Activated CD8-positive, alpha-beta T cell treated with anti-CD3 and anti-CD28 coated beads, Interleukin-2, amount 10 ng/mL, durations not matched to agents 7 days and 5 days (primary cell): ENCODE measurements at regions of chr1 and their contacts with region 1.

Region 1: GRCh38 chr1:156813750-156814570 is 2.7 kb downstream of the SH2D2A start:
- DNase-seq: peak; percentile 83
- ATAC-seq: peak; percentile 55
- H3K4me3 Mint-ChIP-seq: peak overlapping the region; percentile 92
- H3K27ac Mint-ChIP-seq: peak overlapping the region; percentile 100
- H3K4me1 Mint-ChIP-seq: peaks cover 70% of the 10 kb centered on the region
- H3K27me3 Mint-ChIP-seq: no peaks in the 10 kb centered on the region

Region 2: DNA sequence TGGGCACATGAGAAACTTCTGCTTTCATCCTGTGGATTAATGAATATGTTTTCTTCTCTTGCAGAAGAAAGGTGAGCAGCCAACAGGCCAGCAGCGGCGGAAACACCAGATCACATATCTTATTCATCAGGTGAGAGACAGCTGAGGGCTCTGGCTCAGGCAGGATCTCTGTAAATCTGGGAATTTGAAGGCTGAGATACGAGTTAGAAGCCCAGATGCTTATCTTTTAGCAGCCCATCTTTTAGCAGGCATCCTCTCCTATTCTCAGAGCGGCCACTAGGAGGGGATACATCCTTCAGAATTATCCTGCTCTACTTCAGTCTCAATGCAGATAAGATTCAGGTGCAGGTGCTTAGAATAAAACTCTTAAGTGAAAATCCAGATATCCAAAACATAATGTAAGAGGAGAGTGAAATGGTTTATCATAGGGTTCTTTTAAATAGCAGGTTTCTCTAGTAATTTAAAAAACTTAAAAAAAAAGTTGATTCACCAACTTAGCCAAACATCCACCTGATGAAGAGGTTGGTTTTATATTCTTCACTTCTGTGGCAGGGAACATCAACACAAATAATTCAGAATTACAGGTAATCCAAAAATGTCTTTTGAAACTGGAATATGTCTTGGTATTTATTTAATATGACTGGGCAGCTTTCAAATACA is 16.6 kb before region 1 on chr1:
- CTCF ChIA-PET with region 1: interaction called, 47 read pairs
- POLR2A ChIA-PET with region 1: interaction called, 30 read pairs
- DNase-seq: peak; percentile 81
- ATAC-seq: peak; percentile 76
- H3K4me3 Mint-ChIP-seq: no peak overlapping the region
- H3K27ac Mint-ChIP-seq: no peak overlapping the region
- H3K4me1 Mint-ChIP-seq: peaks cover 24% of the 10 kb centered on the region
- H3K27me3 Mint-ChIP-seq: no peaks in the 10 kb centered on the region

Region 3: DNA sequence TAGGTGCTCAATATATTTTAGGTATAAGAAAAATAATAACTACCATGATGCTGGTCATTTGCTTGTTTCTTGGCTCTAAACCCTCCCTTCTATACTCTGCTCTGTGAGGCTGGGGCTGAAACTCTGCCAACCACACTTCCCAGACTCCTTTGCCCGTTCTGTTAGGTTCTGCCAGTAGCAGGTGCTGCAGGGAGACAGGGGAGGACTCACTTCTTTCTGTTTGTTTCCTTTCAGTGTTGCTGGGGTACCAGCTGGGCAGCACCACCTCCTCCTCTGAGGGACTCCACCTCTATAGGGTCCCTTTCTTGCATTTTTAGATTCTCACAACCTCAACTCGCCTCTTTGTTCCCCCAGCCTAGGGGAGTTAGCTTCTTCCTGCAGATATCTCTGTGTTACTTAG is 19.6 kb after region 1 on chr1:
- CTCF ChIA-PET with region 1: interaction called, 98 read pairs
- POLR2A ChIA-PET with region 1: interaction called, 5 read pairs
- DNase-seq: peak; percentile 50
- ATAC-seq: peak; percentile 81
- H3K4me3 Mint-ChIP-seq: no peak overlapping the region
- H3K27ac Mint-ChIP-seq: no peak overlapping the region
- H3K4me1 Mint-ChIP-seq: peaks cover 46% of the 10 kb centered on the region
- H3K27me3 Mint-ChIP-seq: peaks cover 12% of the 10 kb centered on the region

Region 4: DNA sequence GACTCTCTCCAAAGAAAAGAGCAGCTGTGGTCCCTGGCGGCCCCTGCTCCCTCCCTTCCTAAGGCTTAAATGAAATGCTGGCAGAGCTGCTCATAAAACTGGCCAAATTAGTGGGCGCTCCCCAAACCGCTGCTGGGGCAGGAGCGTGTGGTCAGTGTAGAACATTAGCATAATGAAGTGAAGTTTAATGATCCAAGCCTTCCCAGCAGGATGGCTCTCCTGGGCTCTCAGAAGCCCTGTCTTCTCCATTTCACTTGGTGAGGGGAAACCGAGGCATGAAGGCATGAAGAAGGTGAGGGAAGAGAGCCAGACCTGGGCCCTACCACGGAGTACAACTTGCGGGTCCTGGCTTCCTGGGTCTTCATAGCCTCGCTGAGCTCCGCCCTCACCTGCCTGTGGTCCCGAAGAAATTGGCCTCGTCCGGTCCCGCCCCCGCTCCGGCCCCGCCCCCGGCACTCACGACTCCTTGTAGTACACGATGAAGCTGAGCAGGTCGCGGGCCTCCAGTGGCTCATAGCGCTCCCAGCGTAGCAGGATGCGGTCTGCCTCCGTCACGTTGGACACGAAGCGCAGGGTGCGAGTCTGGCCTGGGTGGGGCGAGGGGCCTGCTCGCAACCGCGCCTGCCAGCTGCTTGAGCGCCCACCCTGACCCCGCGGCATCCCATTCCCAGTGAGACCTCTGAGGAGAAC is 34.6 kb after region 1 on chr1:
- CTCF ChIA-PET with region 1: interaction called, 8 read pairs
- POLR2A ChIA-PET with region 1: interaction called, 10 read pairs
- DNase-seq: peak; percentile 93
- ATAC-seq: peak; percentile 89
- H3K4me3 Mint-ChIP-seq: peak overlapping the region; percentile 56
- H3K27ac Mint-ChIP-seq: peak overlapping the region; percentile 86
- H3K4me1 Mint-ChIP-seq: peaks cover 49% of the 10 kb centered on the region
- H3K27me3 Mint-ChIP-seq: peaks cover 30% of the 10 kb centered on the region